ENCODE measurements at regions of chrX and their contacts with region 1.

Region 1: GRCh38 chrX:20141281-20142220 is at the start of gene EIF1AX:
- DNase-seq: peak; percentile 99 to 100
- H3K4me3 ChIP-seq: peak within 1 kb of the TSS; percentile 59 to 95
- H3K27ac ChIP-seq: peak within 1 kb of the TSS; percentile 92
- H3K4me1 ChIP-seq: peaks cover 35% of the 10 kb centered on the region
- H3K27me3 ChIP-seq: no peaks in the 10 kb centered on the region
- CTCF ChIP-seq: no peak
- POLR2A ChIP-seq: peak in 1 of 2 donors; percentile 90
- total RNA-seq, gene EIF1AX: 47.6 TPM

Region 2: GRCh38 chrX:20266810-20267606 is 125.5 kb after region 1 on chrX and contains the start of gene RPS6KA3:
- intact Hi-C with region 1: loop called (anchors 5 kb)
- DNase-seq: peak in 1 of 2 donors; percentile 91
- H3K4me3 ChIP-seq: peak within 1 kb of the TSS; percentile 68 to 69
- H3K27ac ChIP-seq: peak within 1 kb of the TSS; percentile 86
- H3K4me1 ChIP-seq: no peaks in the 10 kb centered on the region
- H3K27me3 ChIP-seq: no peaks in the 10 kb centered on the region
- CTCF ChIP-seq: no peak
- POLR2A ChIP-seq: peak in 1 of 2 donors; percentile 64
- total RNA-seq, gene RPS6KA3: 22.8 TPM

Measured in vagina (tissue), 2 donors.